ENCODE measurements at regions of chrX and their contacts with region 1.

Region 1: GRCh38 chrX:109403927-109404326 is 78.0 kb downstream of the GUCY2F start:
- DNase-seq: no peak
- H3K4me3 ChIP-seq: no peak overlapping the region
- H3K27ac ChIP-seq: no peak overlapping the region
- H3K4me1 ChIP-seq: no peaks in the 10 kb centered on the region
- H3K27me3 ChIP-seq: peaks cover 0 to 78% of the 10 kb centered on the region in 2 donors
- CTCF ChIP-seq: no peak
- POLR2A ChIP-seq: no peak

Region 2: DNA sequence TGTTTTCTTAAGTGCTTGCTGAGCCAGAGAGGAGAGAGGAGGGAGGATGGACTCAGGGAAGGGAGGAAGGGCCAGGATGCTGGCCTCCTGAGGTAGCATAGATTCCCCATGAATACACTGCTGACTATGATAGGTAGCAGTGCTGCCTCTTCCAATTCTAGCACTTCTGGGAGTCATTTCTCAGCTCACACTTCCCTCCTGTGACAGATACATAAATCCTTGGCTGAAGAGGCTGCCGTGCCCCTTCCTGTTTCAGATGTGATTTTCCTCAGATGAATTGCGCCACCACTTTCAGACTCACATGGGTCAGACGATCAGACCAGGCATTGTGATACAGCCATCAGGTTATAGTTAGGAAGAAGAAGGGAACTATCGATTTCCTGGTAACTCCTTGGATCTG is 1650.7 kb before region 1 on chrX:
- intact Hi-C with region 1: loop called (anchors 10 kb)
- DNase-seq: no peak
- H3K4me3 ChIP-seq: no peak overlapping the region
- H3K27ac ChIP-seq: peak overlapping the region in 1 of 2 donors; percentile 12
- H3K4me1 ChIP-seq: no peaks in the 10 kb centered on the region
- H3K27me3 ChIP-seq: peaks cover 0 to 41% of the 10 kb centered on the region in 2 donors
- CTCF ChIP-seq: no peak
- POLR2A ChIP-seq: no peak

Region 3: GRCh38 chrX:109270580-109271484 is 133.1 kb before region 1 on chrX:
- intact Hi-C with region 1: no loop called
- DNase-seq: peak in 1 of 2 donors; percentile 65
- H3K4me3 ChIP-seq: no peak overlapping the region
- H3K27ac ChIP-seq: peak overlapping the region in 1 of 2 donors; percentile 25
- H3K4me1 ChIP-seq: no peaks in the 10 kb centered on the region
- H3K27me3 ChIP-seq: peaks cover 0 to 43% of the 10 kb centered on the region in 2 donors
- CTCF ChIP-seq: no peak
- POLR2A ChIP-seq: no peak